ENCODE measurements at regions of chr2 and their contacts with region 1.

Region 1: GRCh38 chr2:64653349-64654062 is at the start of gene SERTAD2:
- DNase-seq: peak; percentile 85
- H3K4me3 Mint-ChIP-seq: peak within 1 kb of the TSS; percentile 79
- H3K27ac Mint-ChIP-seq: peak within 1 kb of the TSS; percentile 83
- H3K4me1 Mint-ChIP-seq: peaks cover 74% of the 10 kb centered on the region
- H3K27me3 Mint-ChIP-seq: no peaks in the 10 kb centered on the region
- total RNA-seq, gene SERTAD2: 11.4 to 11.6 TPM

Region 2: GRCh38 chr2:64666810-64667438 is 13.4 kb after region 1 on chr2:
- CTCF ChIA-PET with region 1: interaction called, 9 read pairs
- intact Hi-C with region 1: loop called (anchors 1 kb)
- DNase-seq: no peak
- H3K4me3 Mint-ChIP-seq: peak overlapping the region; percentile 4
- H3K27ac Mint-ChIP-seq: peak overlapping the region; percentile 50
- H3K4me1 Mint-ChIP-seq: peaks cover 46% of the 10 kb centered on the region
- H3K27me3 Mint-ChIP-seq: no peaks in the 10 kb centered on the region

Region 3: DNA sequence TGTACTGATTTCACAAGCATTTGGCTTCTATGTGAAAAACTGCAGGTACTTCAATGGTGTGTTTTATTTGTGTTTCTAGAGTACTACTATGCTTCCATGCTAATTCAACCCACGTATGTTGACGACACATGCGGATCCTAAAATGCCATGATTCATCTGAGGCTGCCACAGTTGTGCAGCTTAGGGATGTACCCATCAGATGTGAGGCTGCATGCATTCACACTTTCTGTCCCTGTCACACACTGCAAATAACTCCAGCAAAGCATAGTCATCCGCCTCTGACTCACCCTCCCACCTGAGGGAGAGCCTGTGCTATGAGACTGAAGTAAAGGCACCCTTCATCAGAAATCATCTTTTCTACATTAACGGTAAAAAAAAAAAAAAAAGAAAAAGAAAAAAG is 22.4 kb after region 1 on chr2:
- CTCF ChIA-PET with region 1: interaction called, 8 read pairs
- intact Hi-C with region 1: loop called (anchors 1 kb)
- DNase-seq: peak; percentile 92
- H3K4me3 Mint-ChIP-seq: no peak overlapping the region
- H3K27ac Mint-ChIP-seq: no peak overlapping the region
- H3K4me1 Mint-ChIP-seq: peaks cover 42% of the 10 kb centered on the region
- H3K27me3 Mint-ChIP-seq: no peaks in the 10 kb centered on the region

Region 4: GRCh38 chr2:64730551-64731262 is 77.2 kb after region 1 on chr2:
- CTCF ChIA-PET with region 1: interaction called, 4 read pairs
- intact Hi-C with region 1: loop called (anchors 1 kb)
- DNase-seq: peak; percentile 49
- H3K4me3 Mint-ChIP-seq: peak overlapping the region; percentile 78
- H3K27ac Mint-ChIP-seq: peak overlapping the region; percentile 90
- H3K4me1 Mint-ChIP-seq: peaks cover 63% of the 10 kb centered on the region
- H3K27me3 Mint-ChIP-seq: no peaks in the 10 kb centered on the region